H1 (cell line): ENCODE measurements at regions of chr21 and their contacts with region 1.

Region 1: GRCh38 chr21:23016405-23017016 is 2018.3 kb downstream of the NCAM2 start:
- DNase-seq: peak in 1 of 2 experiments; percentile 15
- H3K4me3 ChIP-seq: no peak overlapping the region
- H3K27ac ChIP-seq: no peak overlapping the region
- H3K4me1 ChIP-seq: no peaks in the 10 kb centered on the region
- H3K27me3 ChIP-seq: no peaks in the 10 kb centered on the region
- CTCF ChIP-seq: peak; percentile 50 to 73 (median 63); a peak in 3 of 4 replicates
- EP300 ChIP-seq: no peak
- POLR2A ChIP-seq: no peak
- RAD21 ChIP-seq: peak; percentile 66 to 74

Region 2: GRCh38 chr21:23003951-23004350 is 12.6 kb before region 1 on chr21:
- CTCF ChIA-PET with region 1: interaction called, 16 read pairs
- POLR2A ChIA-PET with region 1: no interaction called
- DNase-seq: no peak
- H3K4me3 ChIP-seq: no peak overlapping the region
- H3K27ac ChIP-seq: no peak overlapping the region
- H3K4me1 ChIP-seq: no peaks in the 10 kb centered on the region
- H3K27me3 ChIP-seq: no peaks in the 10 kb centered on the region
- CTCF ChIP-seq: no peak
- EP300 ChIP-seq: no peak
- POLR2A ChIP-seq: no peak
- RAD21 ChIP-seq: no peak